Dendritic cell treated with granulocyte-macrophage colony-stimulating factor and Interleukin-4, amounts not matched to agents 40 ng/mL and 50 ng/mL, for 4 days (primary cell): ENCODE measurements at regions of chr6 and their contacts with region 1.

Region 1: GRCh38 chr6:111763381-111763780 is 109.9 kb downstream of the FYN start:
- H3K4me3 Mint-ChIP-seq: no peak overlapping the region
- H3K27ac Mint-ChIP-seq: no peak overlapping the region
- H3K4me1 Mint-ChIP-seq: peaks cover 71% of the 10 kb centered on the region
- H3K27me3 Mint-ChIP-seq: no peaks in the 10 kb centered on the region

Region 2: GRCh38 chr6:111794727-111795452 is 31.5 kb after region 1 on chr6:
- intact Hi-C with region 1: loop called (anchors 1 kb)
- H3K4me3 Mint-ChIP-seq: no peak overlapping the region
- H3K27ac Mint-ChIP-seq: no peak overlapping the region
- H3K4me1 Mint-ChIP-seq: peaks cover 14% of the 10 kb centered on the region
- H3K27me3 Mint-ChIP-seq: no peaks in the 10 kb centered on the region